Right ventricle myocardium superior (tissue), 1 donor: ENCODE measurements at regions of chr3 and their contacts with region 1.

Region 1: GRCh38 chr3:32510075-32510724 is 7.5 kb upstream of the CMTM6 start:
- DNase-seq: peak; percentile 51
- ATAC-seq: peak; percentile 97

Region 2: DNA sequence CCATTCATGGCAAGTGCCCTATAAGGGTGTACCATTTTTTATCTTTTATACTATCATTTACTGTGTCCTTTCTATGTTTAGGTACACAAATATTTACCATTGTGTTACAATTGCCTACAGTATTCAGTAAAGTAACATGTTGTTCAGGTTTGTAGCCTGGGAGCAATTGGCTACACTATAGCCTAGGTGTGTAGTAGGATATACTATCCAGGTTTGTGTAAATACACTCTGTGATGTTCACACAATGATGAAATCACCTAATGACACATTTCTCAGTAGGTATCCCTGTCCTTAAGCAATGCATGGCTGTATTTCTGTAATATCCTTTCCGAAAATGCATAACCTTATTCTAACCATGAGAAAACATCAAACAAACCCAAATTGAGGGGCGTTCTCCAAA is 156.9 kb after region 1 on chr3:
- intact Hi-C with region 1: loop called (anchors 2 kb)
- DNase-seq: no peak
- ATAC-seq: no peak